HEK293 (cell line): ENCODE measurements at regions of chr17 and their contacts with region 1.

Region 1: DNA sequence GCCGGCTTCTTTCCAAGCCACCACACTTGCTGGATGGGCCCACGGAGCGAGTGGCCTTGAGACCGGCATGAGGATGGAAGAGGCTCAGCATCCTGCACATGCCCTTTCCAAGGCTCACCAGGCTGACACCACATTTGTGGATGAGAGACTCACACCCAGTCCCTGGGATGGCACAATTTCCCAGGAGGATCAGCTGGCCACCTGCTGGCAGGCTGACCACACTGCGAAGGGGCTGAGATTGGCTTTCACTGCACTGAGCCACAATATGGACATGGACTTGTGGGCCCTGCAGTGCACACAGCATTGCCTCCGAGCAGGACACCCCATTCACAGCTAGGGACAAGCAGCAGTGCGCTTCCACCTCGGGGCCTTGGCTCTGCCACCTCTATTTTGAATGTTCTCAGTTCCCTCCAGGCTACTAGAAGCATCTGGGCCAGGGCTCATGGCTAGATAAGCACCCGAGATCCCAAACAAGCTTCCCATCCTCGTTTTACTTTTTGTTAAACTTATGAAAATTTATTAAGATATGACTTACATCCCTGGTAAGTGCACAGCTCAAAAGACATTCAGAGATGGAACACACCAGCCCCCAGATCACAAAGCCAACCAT is 25.3 kb upstream of the KSR1 start:
- H3K4me3 ChIP-seq: no peak overlapping the region
- H3K27ac ChIP-seq: no peak overlapping the region
- H3K4me1 ChIP-seq: no peaks in the 10 kb centered on the region
- CTCF ChIP-seq: peak; percentile 56

Region 2: GRCh38 chr17:27294689-27295630 is 136.0 kb before region 1 on chr17:
- CTCF ChIA-PET with region 1: no interaction called
- POLR2A ChIA-PET with region 1: no interaction called
- H3K4me3 ChIP-seq: peak overlapping the region; percentile 75
- H3K27ac ChIP-seq: peak overlapping the region; percentile 94
- H3K4me1 ChIP-seq: peaks cover 8% of the 10 kb centered on the region
- CTCF ChIP-seq: no peak

Region 3: GRCh38 chr17:27367121-27367991 is 63.6 kb before region 1 on chr17:
- CTCF ChIA-PET with region 1: no interaction called
- POLR2A ChIA-PET with region 1: no interaction called
- H3K4me3 ChIP-seq: no peak overlapping the region
- H3K27ac ChIP-seq: no peak overlapping the region
- H3K4me1 ChIP-seq: no peaks in the 10 kb centered on the region
- CTCF ChIP-seq: no peak

Region 4: DNA sequence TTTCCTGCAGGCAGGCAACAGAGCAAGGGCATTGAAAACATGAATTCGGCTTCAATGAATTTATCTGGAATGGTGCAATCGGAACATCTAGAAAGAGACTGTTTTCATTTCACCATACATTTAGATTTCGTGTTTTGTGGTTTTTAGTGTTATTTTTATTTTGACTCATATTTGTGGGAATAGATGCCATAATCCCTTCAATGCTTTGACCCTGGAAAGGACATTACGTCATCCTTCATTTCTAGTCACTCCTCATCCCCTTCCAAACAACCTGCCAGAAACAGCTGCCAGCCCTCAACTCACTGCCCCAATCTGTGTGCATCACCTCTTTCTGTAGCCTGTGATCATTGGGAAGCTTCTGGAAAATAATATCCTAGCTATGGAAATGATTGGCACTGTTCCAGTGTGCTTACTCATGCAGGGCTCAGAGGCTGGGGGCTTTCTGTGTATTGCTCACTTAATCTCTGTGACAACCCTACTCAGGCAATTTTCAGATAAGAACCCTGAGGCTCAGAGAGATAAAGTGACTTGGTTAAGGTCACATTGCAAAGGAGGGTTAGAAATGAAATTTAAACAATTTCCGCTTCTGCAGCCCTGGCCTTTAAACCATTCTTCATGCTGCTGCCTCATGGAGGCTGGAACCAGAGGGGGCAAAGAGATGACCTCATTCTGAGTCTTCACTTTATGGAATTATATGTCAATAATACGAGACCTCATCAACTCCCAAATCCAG is 15.7 kb after region 1 on chr17:
- CTCF ChIA-PET with region 1: interaction called, 11 read pairs
- POLR2A ChIA-PET with region 1: no interaction called
- H3K4me3 ChIP-seq: no peak overlapping the region
- H3K27ac ChIP-seq: peak overlapping the region; percentile 10; the same call in 1 of the 2 replicates
- H3K4me1 ChIP-seq: peaks cover 8% of the 10 kb centered on the region
- CTCF ChIP-seq: no peak